ENCODE measurements at regions of chr4 and their contacts with region 1.

Region 1: GRCh38 chr4:82044142-82044993 is 329.4 kb downstream of the HNRNPD start:
- DNase-seq: peak; percentile 19 to 89
- H3K4me3 ChIP-seq: peak overlapping the region; percentile 26
- CTCF ChIP-seq: no peak
- POLR2A ChIP-seq: no peak

Region 2: GRCh38 chr4:81471588-81472288 is 572.6 kb before region 1 on chr4 and contains the start of gene RASGEF1B:
- intact Hi-C with region 1: no loop called
- DNase-seq: peak; percentile 88 to 97
- H3K4me3 ChIP-seq: peak within 1 kb of the TSS; percentile 94
- CTCF ChIP-seq: no peak
- POLR2A ChIP-seq: no peak
- total RNA-seq, gene RASGEF1B: 53.7 to 58.2 (median 57.6) TPM

Region 3: GRCh38 chr4:81724925-81725329 is 319.4 kb before region 1 on chr4:
- intact Hi-C with region 1: loop called (anchors 2 kb)
- DNase-seq: peak; percentile 76 to 94
- H3K4me3 ChIP-seq: no peak overlapping the region
- CTCF ChIP-seq: no peak
- POLR2A ChIP-seq: no peak

Measured in lower leg skin (tissue), 4 donors.